CD8-positive, alpha-beta T cell (primary cell): ENCODE measurements at regions of chr6 and their contacts with region 1.

Region 1: GRCh38 chr6:125191916-125192609 is 38.5 kb downstream of the TPD52L1 start:
- DNase-seq: peak in 8 of 9 experiments; percentile 21 to 68 (median 48)
- ATAC-seq: peak; percentile 83
- H3K4me3 ChIP-seq: no peak overlapping the region
- H3K4me3 Mint-ChIP-seq: no peak overlapping the region
- H3K27ac ChIP-seq: no peak overlapping the region
- H3K27ac Mint-ChIP-seq: no peak overlapping the region
- H3K4me1 ChIP-seq: no peaks in the 10 kb centered on the region
- H3K4me1 Mint-ChIP-seq: peaks cover 3% of the 10 kb centered on the region
- H3K27me3 ChIP-seq: no peaks in the 10 kb centered on the region
- H3K27me3 Mint-ChIP-seq: peaks cover 6% of the 10 kb centered on the region
- CTCF ChIP-seq: peak; percentile 72

Region 2: DNA sequence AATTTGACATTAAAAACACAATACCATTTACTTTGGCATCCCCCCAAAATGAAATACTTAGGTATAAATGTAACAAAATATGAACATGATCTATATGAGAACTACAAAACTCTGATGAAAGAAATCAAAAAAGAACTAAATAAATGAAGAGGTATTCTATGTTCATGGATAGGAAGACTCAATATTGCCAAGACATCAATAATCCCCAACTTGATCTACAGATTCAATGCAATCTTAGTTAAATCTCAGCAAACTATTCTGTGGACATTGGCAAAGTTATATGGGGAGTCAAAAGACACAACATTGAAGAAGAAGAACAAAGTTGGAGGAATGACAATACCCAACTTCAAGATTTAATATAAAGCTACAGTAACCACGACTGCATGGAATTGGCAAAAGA is 412.2 kb after region 1 on chr6:
- CTCF ChIA-PET with region 1: no interaction called
- POLR2A ChIA-PET with region 1: no interaction called
- intact Hi-C with region 1: no loop called
- DNase-seq: no peak
- ATAC-seq: no peak
- H3K4me3 ChIP-seq: no peak overlapping the region
- H3K4me3 Mint-ChIP-seq: no peak overlapping the region
- H3K27ac ChIP-seq: no peak overlapping the region
- H3K27ac Mint-ChIP-seq: no peak overlapping the region
- H3K4me1 ChIP-seq: no peaks in the 10 kb centered on the region
- H3K4me1 Mint-ChIP-seq: no peaks in the 10 kb centered on the region
- H3K27me3 ChIP-seq: no peaks in the 10 kb centered on the region
- H3K27me3 Mint-ChIP-seq: peaks cover 5% of the 10 kb centered on the region
- CTCF ChIP-seq: no peak

Region 3: GRCh38 chr6:125769147-125769783 is 577.2 kb after region 1 on chr6:
- CTCF ChIA-PET with region 1: interaction called, 4 read pairs
- POLR2A ChIA-PET with region 1: no interaction called
- intact Hi-C with region 1: loop called (anchors 1 to 5 kb)
- DNase-seq: no peak
- ATAC-seq: no peak
- H3K4me3 ChIP-seq: no peak overlapping the region
- H3K4me3 Mint-ChIP-seq: no peak overlapping the region
- H3K27ac ChIP-seq: no peak overlapping the region
- H3K27ac Mint-ChIP-seq: no peak overlapping the region
- H3K4me1 ChIP-seq: no peaks in the 10 kb centered on the region
- H3K4me1 Mint-ChIP-seq: peaks cover 2% of the 10 kb centered on the region
- H3K27me3 ChIP-seq: no peaks in the 10 kb centered on the region
- H3K27me3 Mint-ChIP-seq: peaks cover 16% of the 10 kb centered on the region
- CTCF ChIP-seq: no peak

Region 4: GRCh38 chr6:126546541-126547120 is 1354.6 kb after region 1 on chr6:
- CTCF ChIA-PET with region 1: no interaction called
- POLR2A ChIA-PET with region 1: no interaction called
- intact Hi-C with region 1: loop called in 1 of 2 experiments (anchors 5 kb)
- DNase-seq: no peak
- ATAC-seq: no peak
- H3K4me3 ChIP-seq: no peak overlapping the region
- H3K4me3 Mint-ChIP-seq: no peak overlapping the region
- H3K27ac ChIP-seq: no peak overlapping the region
- H3K27ac Mint-ChIP-seq: no peak overlapping the region
- H3K4me1 ChIP-seq: no peaks in the 10 kb centered on the region
- H3K4me1 Mint-ChIP-seq: no peaks in the 10 kb centered on the region
- H3K27me3 ChIP-seq: no peaks in the 10 kb centered on the region
- H3K27me3 Mint-ChIP-seq: no peaks in the 10 kb centered on the region
- CTCF ChIP-seq: no peak